ENCODE measurements at regions of chrX and their contacts with region 1.

Region 1: GRCh38 chrX:75968293-75968692 is 183.2 kb upstream of the MAGEE2 start:
- DNase-seq: peak in 1 of 2 experiments; percentile 2
- H3K4me3 ChIP-seq: no peak overlapping the region
- H3K4me3 Mint-ChIP-seq: no peak overlapping the region
- H3K27ac Mint-ChIP-seq: no peak overlapping the region
- H3K4me1 ChIP-seq: no peaks in the 10 kb centered on the region
- H3K4me1 Mint-ChIP-seq: no peaks in the 10 kb centered on the region
- H3K27me3 ChIP-seq: no peaks in the 10 kb centered on the region
- H3K27me3 Mint-ChIP-seq: no peaks in the 10 kb centered on the region
- CTCF ChIP-seq: no peak

Region 2: DNA sequence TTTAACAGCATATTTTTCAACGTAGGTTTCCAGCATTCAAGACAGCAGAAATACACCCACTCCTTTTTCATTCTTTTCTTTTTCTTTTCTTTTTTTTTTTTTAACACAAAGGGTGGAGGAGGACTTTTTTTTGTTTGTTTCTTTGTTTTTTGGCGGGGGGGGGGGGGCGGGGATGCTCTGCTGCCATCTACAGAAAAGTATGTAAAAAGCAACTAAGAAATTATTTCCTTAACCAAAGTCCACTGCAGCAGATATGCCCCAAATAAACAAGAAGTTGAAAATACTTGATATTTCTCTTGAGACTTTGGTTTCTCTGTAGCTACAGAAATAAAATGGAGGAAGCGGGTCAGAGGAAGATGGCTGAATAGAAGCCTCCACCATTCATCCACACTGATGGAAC is 141.4 kb after region 1 on chrX:
- CTCF ChIA-PET with region 1: no interaction called
- POLR2A ChIA-PET with region 1: no interaction called
- intact Hi-C with region 1: no loop called
- DNase-seq: no peak
- H3K4me3 ChIP-seq: no peak overlapping the region
- H3K4me3 Mint-ChIP-seq: no peak overlapping the region
- H3K27ac Mint-ChIP-seq: no peak overlapping the region
- H3K4me1 ChIP-seq: no peaks in the 10 kb centered on the region
- H3K4me1 Mint-ChIP-seq: no peaks in the 10 kb centered on the region
- H3K27me3 ChIP-seq: no peaks in the 10 kb centered on the region
- H3K27me3 Mint-ChIP-seq: no peaks in the 10 kb centered on the region
- CTCF ChIP-seq: peak in 1 of 2 experiments; percentile 10

Region 3: GRCh38 chrX:76127341-76127740 is 159.0 kb after region 1 on chrX:
- CTCF ChIA-PET with region 1: no interaction called
- POLR2A ChIA-PET with region 1: no interaction called
- intact Hi-C with region 1: loop called (anchors 1 kb)
- DNase-seq: peak; percentile 54 to 60
- H3K4me3 ChIP-seq: no peak overlapping the region
- H3K4me3 Mint-ChIP-seq: no peak overlapping the region
- H3K27ac Mint-ChIP-seq: no peak overlapping the region
- H3K4me1 ChIP-seq: no peaks in the 10 kb centered on the region
- H3K4me1 Mint-ChIP-seq: no peaks in the 10 kb centered on the region
- H3K27me3 ChIP-seq: no peaks in the 10 kb centered on the region
- H3K27me3 Mint-ChIP-seq: no peaks in the 10 kb centered on the region
- CTCF ChIP-seq: peak; percentile 35 to 58

Region 4: DNA sequence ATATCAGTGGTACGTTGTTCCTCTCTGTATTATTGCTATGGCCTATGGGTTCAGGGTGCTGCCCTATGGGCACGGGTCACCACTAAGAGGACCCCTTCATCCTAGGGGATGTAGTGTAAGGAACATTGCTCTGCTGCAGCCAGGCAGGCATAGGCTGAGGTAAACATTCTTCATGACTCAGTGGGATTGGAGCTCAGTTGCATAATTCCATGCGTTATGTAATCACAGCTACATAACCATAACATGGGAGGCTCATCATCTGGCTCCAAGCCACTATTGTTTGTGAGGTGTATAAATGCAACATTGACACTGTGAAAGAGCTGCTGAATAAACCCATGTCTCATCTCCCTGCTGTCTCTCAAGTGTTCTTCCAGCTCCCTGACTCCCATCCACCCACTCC is 834.4 kb after region 1 on chrX:
- CTCF ChIA-PET with region 1: no interaction called
- POLR2A ChIA-PET with region 1: no interaction called
- intact Hi-C with region 1: no loop called
- DNase-seq: no peak
- H3K4me3 ChIP-seq: no peak overlapping the region
- H3K4me3 Mint-ChIP-seq: no peak overlapping the region
- H3K27ac Mint-ChIP-seq: no peak overlapping the region
- H3K4me1 ChIP-seq: no peaks in the 10 kb centered on the region
- H3K4me1 Mint-ChIP-seq: no peaks in the 10 kb centered on the region
- H3K27me3 ChIP-seq: no peaks in the 10 kb centered on the region
- H3K27me3 Mint-ChIP-seq: no peaks in the 10 kb centered on the region
- CTCF ChIP-seq: no peak

Measured in Caco-2 (cell line).